K562 (cell line): ENCODE measurements at regions of chr4 and their contacts with region 1.

Region 1: DNA sequence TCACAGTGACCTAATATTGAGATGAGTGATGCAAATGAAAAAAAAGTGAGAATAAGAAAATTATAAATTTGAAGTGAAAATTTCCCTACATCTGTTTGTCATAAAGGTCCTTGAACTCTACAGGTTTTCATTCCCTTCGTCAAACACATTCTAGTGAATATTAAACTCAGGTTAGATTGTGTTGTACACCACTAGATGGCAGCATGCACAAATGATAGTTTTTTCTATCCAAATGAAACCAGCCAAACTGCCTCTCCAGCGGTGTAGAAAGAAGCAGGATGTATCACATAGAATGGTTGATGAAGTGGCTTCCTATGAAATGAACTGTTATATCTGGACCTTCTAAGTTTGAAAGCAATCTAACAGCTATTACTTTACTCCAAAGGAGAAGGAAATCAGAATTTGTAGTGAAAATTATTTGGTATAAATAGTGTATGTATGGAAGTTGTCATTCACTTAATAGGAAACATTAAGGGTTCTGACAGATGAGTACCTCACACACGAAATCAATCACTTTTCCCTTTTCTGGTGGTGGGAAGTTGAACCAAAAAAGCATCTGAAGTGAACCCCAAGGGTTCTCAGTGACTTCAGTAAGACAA is 382.7 kb downstream of the UNC5C start:
- DNase-seq: peak; percentile 41 to 75 (median 50)
- ATAC-seq: peak; percentile 87
- H3K4me3 ChIP-seq: no peak overlapping the region
- H3K27ac ChIP-seq: no peak overlapping the region
- H3K4me1 ChIP-seq: no peaks in the 10 kb centered on the region
- H3K27me3 ChIP-seq: peaks cover 0 to 8% of the 10 kb centered on the region in 2 experiments; a peak in 3 of 5 replicates
- CTCF ChIP-seq: peak; percentile 42 to 76 (median 57); a peak in 4 of 6 replicates
- EP300 ChIP-seq: no peak
- POLR2A ChIP-seq: no peak
- RAD21 ChIP-seq: peak; percentile 84 to 89

Region 2: DNA sequence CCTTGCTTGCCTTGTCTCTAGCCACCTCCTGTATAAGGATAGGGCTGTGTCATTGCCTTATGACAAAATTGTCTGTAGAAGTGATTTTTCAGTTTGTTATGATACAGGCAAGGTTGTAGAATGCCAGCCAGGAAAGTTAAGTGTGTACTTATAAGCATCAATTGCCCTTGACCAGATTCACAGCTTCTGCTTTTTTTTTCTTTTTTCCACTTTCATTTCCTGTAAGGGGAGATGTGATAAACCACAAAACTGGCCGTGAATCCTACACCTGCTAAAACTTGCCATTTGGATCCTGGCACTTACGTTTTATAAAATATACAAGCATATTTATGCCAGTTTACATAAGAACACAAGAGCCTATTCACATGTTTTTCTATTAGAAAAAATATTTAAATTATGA is 443.3 kb before region 1 on chr4:
- CTCF ChIA-PET with region 1: no interaction called
- POLR2A ChIA-PET with region 1: no interaction called
- in situ Hi-C with region 1: no loop called
- intact Hi-C with region 1: no loop called
- DNase-seq: no peak
- ATAC-seq: no peak
- H3K4me3 ChIP-seq: no peak overlapping the region
- H3K27ac ChIP-seq: no peak overlapping the region
- H3K4me1 ChIP-seq: no peaks in the 10 kb centered on the region
- H3K27me3 ChIP-seq: peaks cover 0 to 7% of the 10 kb centered on the region in 2 experiments; a peak in 2 of 5 replicates
- CTCF ChIP-seq: no peak
- EP300 ChIP-seq: no peak
- POLR2A ChIP-seq: no peak
- RAD21 ChIP-seq: no peak

Region 3: GRCh38 chr4:95267081-95267480 is 101.1 kb after region 1 on chr4:
- CTCF ChIA-PET with region 1: interaction called, 3 read pairs
- POLR2A ChIA-PET with region 1: no interaction called
- in situ Hi-C with region 1: no loop called
- intact Hi-C with region 1: loop called (anchors 1 kb)
- DNase-seq: no peak
- ATAC-seq: no peak
- H3K4me3 ChIP-seq: no peak overlapping the region
- H3K27ac ChIP-seq: no peak overlapping the region
- H3K4me1 ChIP-seq: no peaks in the 10 kb centered on the region; a peak in 3 of 5 replicates
- H3K27me3 ChIP-seq: no peaks in the 10 kb centered on the region
- CTCF ChIP-seq: no peak
- EP300 ChIP-seq: no peak
- POLR2A ChIP-seq: no peak
- RAD21 ChIP-seq: no peak

Region 4: GRCh38 chr4:95343235-95343634 is 177.2 kb after region 1 on chr4:
- CTCF ChIA-PET with region 1: no interaction called
- POLR2A ChIA-PET with region 1: no interaction called
- in situ Hi-C with region 1: no loop called
- intact Hi-C with region 1: loop called (anchors 1 kb)
- DNase-seq: no peak
- ATAC-seq: peak; percentile 34; the same call in 1 of the 3 replicates
- H3K4me3 ChIP-seq: no peak overlapping the region
- H3K27ac ChIP-seq: no peak overlapping the region
- H3K4me1 ChIP-seq: no peaks in the 10 kb centered on the region
- H3K27me3 ChIP-seq: no peaks in the 10 kb centered on the region
- CTCF ChIP-seq: peak in 1 of 3 experiments; percentile 47; a peak in 2 of 6 replicates
- EP300 ChIP-seq: no peak
- POLR2A ChIP-seq: no peak
- RAD21 ChIP-seq: peak in 1 of 2 experiments; percentile 31; a peak in 2 of 4 replicates

Region 5: GRCh38 chr4:95499291-95499696 is 333.3 kb after region 1 on chr4:
- CTCF ChIA-PET with region 1: no interaction called
- POLR2A ChIA-PET with region 1: no interaction called
- in situ Hi-C with region 1: loop called (anchors 25 kb)
- intact Hi-C with region 1: loop called (anchors 5 kb)
- DNase-seq: no peak
- ATAC-seq: no peak
- H3K4me3 ChIP-seq: no peak overlapping the region
- H3K27ac ChIP-seq: no peak overlapping the region
- H3K4me1 ChIP-seq: no peaks in the 10 kb centered on the region
- H3K27me3 ChIP-seq: no peaks in the 10 kb centered on the region
- CTCF ChIP-seq: no peak
- EP300 ChIP-seq: no peak
- POLR2A ChIP-seq: no peak
- RAD21 ChIP-seq: no peak

Region 6: DNA sequence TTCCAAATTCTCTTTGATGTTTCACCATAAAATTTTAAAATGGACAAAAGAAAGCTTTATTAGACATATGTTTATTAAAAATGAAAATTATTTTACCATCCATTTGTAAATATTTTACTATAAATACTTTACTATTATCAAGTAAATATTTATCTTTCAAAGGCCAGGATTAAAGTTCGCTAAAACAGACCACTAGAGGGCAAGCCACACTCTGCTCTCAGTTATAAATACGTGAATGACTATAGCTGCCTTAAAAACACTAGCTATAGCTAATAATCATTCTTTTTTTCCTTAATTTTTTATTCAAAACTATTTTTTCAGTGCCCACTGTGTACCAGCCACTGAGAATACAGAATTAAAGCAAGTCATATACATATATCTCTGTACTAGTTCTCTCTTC is 344.1 kb after region 1 on chr4:
- CTCF ChIA-PET with region 1: no interaction called
- POLR2A ChIA-PET with region 1: no interaction called
- in situ Hi-C with region 1: loop called (anchors 25 kb)
- intact Hi-C with region 1: no loop called
- DNase-seq: peak; percentile 8 to 17 (median 11)
- ATAC-seq: no peak
- H3K4me3 ChIP-seq: no peak overlapping the region
- H3K27ac ChIP-seq: no peak overlapping the region
- H3K4me1 ChIP-seq: no peaks in the 10 kb centered on the region
- H3K27me3 ChIP-seq: no peaks in the 10 kb centered on the region
- CTCF ChIP-seq: peak in 2 of 3 experiments; percentile 39 to 57; a peak in 3 of 6 replicates
- EP300 ChIP-seq: no peak
- POLR2A ChIP-seq: no peak
- RAD21 ChIP-seq: peak in 1 of 2 experiments; percentile 46; a peak in 3 of 4 replicates

Region 7: DNA sequence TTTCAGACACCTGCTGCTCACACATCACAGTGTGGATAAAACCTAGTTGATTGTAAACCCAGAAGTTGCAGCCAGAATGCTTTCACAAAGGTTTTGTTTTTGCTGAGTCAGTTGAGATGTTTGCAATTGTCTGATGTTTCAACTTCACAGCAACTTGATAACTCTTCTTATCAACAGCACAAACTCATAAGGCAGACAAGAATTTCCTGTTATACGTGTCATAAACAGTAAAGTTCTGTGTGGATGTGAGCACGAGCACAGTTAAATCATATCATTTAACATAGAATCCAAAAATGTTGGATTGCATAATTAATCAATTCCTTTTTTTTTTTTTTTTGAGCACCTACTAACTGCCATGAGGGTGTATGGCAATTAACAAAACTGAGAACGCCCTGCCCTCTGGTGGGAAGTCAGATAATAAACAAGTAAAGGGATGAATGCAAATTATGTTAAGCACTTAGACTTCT is 1186.1 kb after region 1 on chr4:
- CTCF ChIA-PET with region 1: no interaction called
- POLR2A ChIA-PET with region 1: no interaction called
- in situ Hi-C with region 1: no loop called
- intact Hi-C with region 1: loop called (anchors 5 kb)
- DNase-seq: peak in 1 of 4 experiments; percentile 18
- ATAC-seq: no peak
- H3K4me3 ChIP-seq: no peak overlapping the region
- H3K27ac ChIP-seq: no peak overlapping the region
- H3K4me1 ChIP-seq: no peaks in the 10 kb centered on the region
- H3K27me3 ChIP-seq: no peaks in the 10 kb centered on the region
- CTCF ChIP-seq: peak in 1 of 3 experiments; percentile 30; a peak in 3 of 6 replicates
- EP300 ChIP-seq: no peak
- POLR2A ChIP-seq: no peak
- RAD21 ChIP-seq: peak; percentile 32 to 39; a peak in 2 of 4 replicates